ENCODE measurements at regions of chr19 and their contacts with region 1.

Region 1: DNA sequence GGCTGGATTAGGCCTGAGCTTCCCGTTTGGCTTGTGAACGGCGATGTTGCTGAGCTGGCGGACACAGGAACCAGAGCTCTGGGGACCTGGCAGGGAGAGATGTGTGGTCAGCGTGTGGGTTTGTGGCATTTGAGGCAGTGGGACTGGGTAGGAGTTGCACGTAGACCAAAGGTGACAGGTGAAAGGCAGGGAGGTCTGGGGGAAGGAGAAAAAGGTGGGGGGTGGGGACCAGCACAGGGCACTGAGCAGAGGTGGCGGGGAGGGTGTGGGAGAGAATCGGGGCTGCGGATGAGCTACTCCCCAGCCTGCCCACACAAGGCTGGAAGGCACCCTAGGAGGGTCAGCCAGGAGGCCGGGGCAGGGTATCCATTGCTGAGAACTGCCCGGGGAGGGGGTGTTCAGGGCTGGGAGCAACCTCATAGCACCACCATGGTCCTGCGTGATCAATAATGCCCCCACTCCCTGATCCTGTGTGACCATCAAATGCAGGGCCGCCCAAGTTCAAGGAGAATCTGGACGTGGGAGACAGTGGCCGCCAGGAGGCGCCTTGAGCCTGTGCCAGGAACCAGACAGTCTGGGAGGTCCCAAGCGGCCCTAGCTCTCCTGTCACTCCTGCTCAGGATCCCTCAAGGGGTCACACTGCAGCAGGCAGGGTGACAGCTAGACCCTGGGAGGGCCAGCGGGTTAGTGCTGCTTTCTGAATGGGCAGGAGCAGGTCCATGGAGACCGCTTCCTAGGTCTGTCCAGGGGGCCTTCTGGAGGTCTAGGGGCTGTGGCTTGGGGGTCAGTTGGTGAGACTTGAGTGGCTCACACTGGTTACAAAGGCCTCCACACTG is 12.8 kb upstream of the SELENOW start:
- DNase-seq: peak; percentile 58
- H3K4me3 ChIP-seq: no peak overlapping the region
- H3K27ac ChIP-seq: no peak overlapping the region
- H3K4me1 ChIP-seq: peaks cover 4% of the 10 kb centered on the region
- H3K27me3 ChIP-seq: peaks cover 0 to 2% of the 10 kb centered on the region in 2 experiments
- CTCF ChIP-seq: peak; percentile 79 to 93
- POLR2A ChIP-seq: no peak

Region 2: GRCh38 chr19:47644762-47645482 is 120.8 kb before region 1 on chr19:
- CTCF ChIA-PET with region 1: no interaction called
- POLR2A ChIA-PET with region 1: no interaction called
- dilution Hi-C with region 1: no loop called
- intact Hi-C with region 1: no loop called
- DNase-seq: no peak
- H3K4me3 ChIP-seq: no peak overlapping the region
- H3K27ac ChIP-seq: no peak overlapping the region
- H3K4me1 ChIP-seq: peaks cover 4% of the 10 kb centered on the region
- H3K27me3 ChIP-seq: no peaks in the 10 kb centered on the region
- CTCF ChIP-seq: no peak
- POLR2A ChIP-seq: no peak

Region 3: DNA sequence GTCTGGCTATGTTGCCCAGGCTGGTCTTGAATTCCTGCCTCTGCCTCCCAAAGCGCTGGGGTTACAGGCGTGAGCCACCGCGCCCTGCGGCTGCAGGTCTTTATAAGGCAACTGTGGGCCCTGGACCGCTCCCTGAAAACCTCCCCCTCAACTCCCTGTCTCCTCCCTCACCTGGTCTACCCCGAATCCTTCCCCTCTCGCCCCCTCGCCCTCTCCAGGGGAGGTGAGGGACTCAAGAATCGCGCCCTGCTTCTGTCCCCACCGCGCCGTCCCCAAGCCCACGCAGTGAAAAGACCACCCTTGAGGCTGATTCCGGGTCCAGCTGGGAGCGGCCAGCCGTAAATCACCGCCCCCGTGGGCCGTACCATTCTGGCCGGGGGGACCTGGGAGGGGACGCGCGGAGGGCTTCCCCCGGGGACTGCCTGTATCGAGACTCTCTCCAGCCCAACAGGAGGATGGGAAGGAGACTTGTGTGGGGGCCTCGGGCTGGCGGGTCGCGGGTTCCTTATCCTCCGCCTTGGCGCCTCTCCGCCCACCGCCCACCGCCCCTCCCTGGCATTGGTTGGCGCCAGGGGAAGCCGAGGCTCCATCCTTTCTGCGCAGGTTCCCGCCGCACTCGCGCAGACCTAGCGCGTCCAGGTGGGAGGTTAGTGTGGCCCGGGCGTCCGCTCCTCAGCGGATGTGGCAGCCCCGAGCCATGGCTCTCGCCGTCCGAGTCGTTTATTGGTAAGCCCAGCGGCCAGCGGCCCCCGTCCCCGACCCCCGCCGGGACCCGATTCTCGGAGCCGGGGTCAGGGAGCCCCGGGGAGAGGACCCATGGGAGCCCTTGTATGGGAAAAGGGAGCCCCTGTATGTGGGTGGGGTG is 12.6 kb after region 1 on chr19 and contains the start of gene SELENOW:
- CTCF ChIA-PET with region 1: interaction called, 20 read pairs
- POLR2A ChIA-PET with region 1: no interaction called
- dilution Hi-C with region 1: no loop called
- intact Hi-C with region 1: loop called (anchors 1 kb)
- DNase-seq: peak; percentile 78
- H3K4me3 ChIP-seq: peak within 1 kb of the TSS; percentile 85 to 93 (median 89)
- H3K27ac ChIP-seq: peak within 1 kb of the TSS; percentile 95
- H3K4me1 ChIP-seq: peaks cover 14% of the 10 kb centered on the region
- H3K27me3 ChIP-seq: no peaks in the 10 kb centered on the region
- CTCF ChIP-seq: no peak
- POLR2A ChIP-seq: peak; percentile 93
- total RNA-seq, gene SELENOW: 220 and 316 TPM in 2 replicates

Region 4: DNA sequence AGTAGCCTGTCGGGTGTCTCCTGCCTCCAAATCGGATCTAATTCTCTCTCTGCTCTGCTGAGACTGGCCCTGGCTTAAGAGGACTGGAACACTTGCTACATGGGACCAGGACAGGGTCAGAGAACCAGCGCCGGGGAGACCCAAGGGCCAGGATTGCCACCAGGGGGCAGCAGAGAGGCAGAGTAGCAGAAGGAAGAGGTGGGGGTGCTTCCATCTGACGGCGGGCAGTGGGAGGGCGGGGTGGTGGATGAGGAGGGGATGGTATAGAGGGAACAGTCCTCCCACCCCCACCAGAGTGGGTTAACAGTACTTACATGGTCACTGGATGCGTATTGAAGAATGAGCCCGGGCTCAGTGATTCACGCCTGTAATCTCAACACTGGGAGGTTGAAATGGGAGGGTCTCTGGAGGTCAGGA is 24.7 kb after region 1 on chr19:
- CTCF ChIA-PET with region 1: interaction called, 169 read pairs
- POLR2A ChIA-PET with region 1: interaction called, 3 read pairs
- dilution Hi-C with region 1: no loop called
- intact Hi-C with region 1: loop called (anchors 1 kb)
- DNase-seq: peak; percentile 64
- H3K4me3 ChIP-seq: no peak overlapping the region
- H3K27ac ChIP-seq: no peak overlapping the region
- H3K4me1 ChIP-seq: no peaks in the 10 kb centered on the region
- H3K27me3 ChIP-seq: no peaks in the 10 kb centered on the region
- CTCF ChIP-seq: peak; percentile 75 to 90
- POLR2A ChIP-seq: no peak

Measured in endothelial cell of umbilical vein (primary cell).